ENCODE measurements at regions of chr19 and their contacts with region 1.

Region 1: GRCh38 chr19:13060964-13061927 is 41.4 kb downstream of the LYL1 start:
- DNase-seq: peak; percentile 88 to 96 (median 95)
- ATAC-seq: peak; percentile 76 to 80
- H3K4me3 ChIP-seq: peak overlapping the region; percentile 17
- H3K27ac ChIP-seq: peak overlapping the region; percentile 74
- H3K4me1 ChIP-seq: peaks cover 58% of the 10 kb centered on the region
- H3K27me3 ChIP-seq: no peaks in the 10 kb centered on the region

Region 2: DNA sequence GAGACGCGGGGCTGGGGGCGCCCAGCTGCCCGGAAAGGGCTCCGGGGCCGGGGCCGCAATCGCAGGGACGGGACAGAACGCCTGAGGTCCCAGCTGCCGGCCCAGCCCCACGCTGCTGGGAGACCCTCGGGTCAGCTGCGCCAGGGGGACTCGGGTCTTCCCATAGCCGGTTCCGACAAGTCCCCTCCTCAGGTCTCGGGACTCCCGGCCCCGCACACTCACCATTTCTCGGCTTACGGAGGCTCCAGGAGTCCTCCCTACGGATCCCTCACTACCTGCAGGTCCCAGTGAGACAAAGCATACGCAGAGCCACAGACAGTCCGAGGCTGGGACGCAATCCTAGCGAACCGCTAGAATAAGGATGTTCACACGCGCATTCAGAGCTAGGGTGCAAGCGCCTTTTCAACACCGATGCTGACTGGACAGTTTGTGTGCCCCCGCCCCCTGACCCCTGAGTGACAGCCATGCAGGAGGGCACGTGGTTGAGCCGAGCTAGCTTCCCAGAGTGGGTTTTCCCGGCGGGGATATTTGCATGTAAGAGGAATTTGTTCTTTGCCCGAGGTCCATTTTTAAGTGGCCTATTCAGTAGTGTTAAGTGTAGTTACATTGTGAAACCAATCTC is 464.2 kb before region 1 on chr19:
- intact Hi-C with region 1: no loop called
- DNase-seq: peak in 1 of 3 donors; percentile 53
- ATAC-seq: peak; percentile 49 to 54
- H3K4me3 ChIP-seq: no peak overlapping the region
- H3K27ac ChIP-seq: no peak overlapping the region
- H3K4me1 ChIP-seq: no peaks in the 10 kb centered on the region
- H3K27me3 ChIP-seq: no peaks in the 10 kb centered on the region

Region 3: DNA sequence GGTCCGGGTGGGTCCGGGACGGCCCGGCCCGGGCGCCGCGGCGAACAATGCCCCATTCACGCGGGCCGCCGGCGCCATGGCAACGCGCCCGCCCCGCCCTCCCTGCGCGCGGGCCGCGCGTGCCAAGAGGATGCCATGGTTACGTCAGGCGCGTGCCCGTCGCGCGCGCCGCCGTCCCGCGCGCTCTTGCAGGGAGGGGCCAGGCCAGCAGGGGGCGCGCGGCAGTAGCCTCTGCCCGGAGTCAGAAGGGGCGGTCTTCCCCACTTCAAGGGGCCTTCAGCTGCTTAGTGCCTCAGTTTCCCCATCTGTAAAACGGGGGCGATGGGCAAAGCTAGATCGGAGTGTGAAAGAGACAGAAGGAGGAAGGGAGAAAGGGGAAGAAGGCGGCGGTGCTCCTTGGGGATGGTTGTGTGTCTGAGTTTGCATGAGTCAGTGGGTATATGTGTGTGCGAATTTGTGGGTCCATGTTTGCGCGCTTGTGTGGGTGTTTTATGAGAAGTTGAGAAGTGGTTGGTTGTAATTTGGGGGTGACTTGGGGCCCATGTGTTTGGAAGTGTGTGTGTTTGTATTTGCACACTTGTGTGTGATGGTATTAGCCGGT is 77.6 kb before region 1 on chr19:
- intact Hi-C with region 1: loop called in 2 of 4 experiments (anchors 5 to 10 kb)
- DNase-seq: peak; percentile 81 to 94 (median 93)
- ATAC-seq: peak; percentile 77 to 80
- H3K4me3 ChIP-seq: no peak overlapping the region
- H3K27ac ChIP-seq: no peak overlapping the region
- H3K4me1 ChIP-seq: peaks cover 3% of the 10 kb centered on the region
- H3K27me3 ChIP-seq: no peaks in the 10 kb centered on the region

Region 4: GRCh38 chr19:12994701-12995595 is 66.3 kb before region 1 on chr19 and contains the start of gene NFIX:
- intact Hi-C with region 1: loop called in 1 of 4 experiments (anchors 10 kb)
- DNase-seq: peak; percentile 81 to 91 (median 90)
- ATAC-seq: peak; percentile 35 to 42
- H3K4me3 ChIP-seq: peak within 1 kb of the TSS; percentile 95
- H3K27ac ChIP-seq: peak within 1 kb of the TSS; percentile 22
- H3K4me1 ChIP-seq: peaks cover 3% of the 10 kb centered on the region
- H3K27me3 ChIP-seq: no peaks in the 10 kb centered on the region
- total RNA-seq, gene NFIX: 123 to 168 (median 156) TPM

Region 5: DNA sequence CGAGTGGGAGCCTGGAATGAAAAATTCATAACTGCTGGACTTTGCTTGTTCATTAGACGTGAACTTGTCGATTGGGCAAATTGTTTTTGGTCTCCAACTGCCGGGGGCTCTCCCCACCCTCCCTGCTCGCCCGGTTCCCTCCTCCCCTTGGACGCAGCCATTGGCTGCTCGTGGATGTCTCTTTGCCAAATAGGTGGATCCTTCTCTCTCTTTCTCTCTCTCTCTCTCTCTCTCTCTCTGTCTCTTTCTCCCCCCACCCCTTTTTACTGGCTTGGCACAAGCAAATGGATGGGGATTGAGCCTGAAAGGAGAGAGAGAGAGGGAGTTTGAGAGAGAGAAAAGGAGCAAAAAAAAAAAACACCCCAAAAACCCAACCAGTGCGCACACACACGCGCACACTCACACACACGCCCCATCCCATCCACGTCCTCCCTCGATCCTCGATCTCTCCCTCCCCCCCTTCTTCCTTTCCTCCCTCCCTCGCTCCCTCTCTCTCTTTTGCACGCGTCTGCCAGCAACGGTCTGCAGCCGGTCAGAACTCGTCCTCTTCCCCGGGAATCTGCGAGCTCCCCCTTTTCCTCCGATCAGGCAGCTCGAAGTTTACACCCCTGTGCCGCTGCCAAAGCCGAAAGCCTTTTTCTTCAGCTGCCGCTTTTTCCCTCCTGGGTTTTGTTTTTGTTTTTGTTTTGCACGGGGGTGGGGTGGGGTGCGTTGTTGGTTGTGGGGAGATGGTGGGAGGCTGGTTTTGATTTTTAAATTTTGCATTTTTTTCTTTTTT is 38.2 kb before region 1 on chr19:
- intact Hi-C with region 1: loop called in 2 of 4 experiments (anchors 5 kb)
- DNase-seq: peak; percentile 88 to 94 (median 94)
- ATAC-seq: peak; percentile 82 to 88
- H3K4me3 ChIP-seq: peak overlapping the region; percentile 27
- H3K27ac ChIP-seq: peak overlapping the region; percentile 91
- H3K4me1 ChIP-seq: peaks cover 17% of the 10 kb centered on the region
- H3K27me3 ChIP-seq: no peaks in the 10 kb centered on the region

Region 6: GRCh38 chr19:13099073-13099999 is 38.1 kb after region 1 on chr19:
- intact Hi-C with region 1: loop called in 1 of 4 experiments (anchors 5 kb)
- DNase-seq: peak; percentile 83 to 92 (median 91)
- ATAC-seq: peak in 1 of 2 donors; percentile 6
- H3K4me3 ChIP-seq: peak overlapping the region; percentile 27
- H3K27ac ChIP-seq: peak overlapping the region; percentile 84
- H3K4me1 ChIP-seq: no peaks in the 10 kb centered on the region
- H3K27me3 ChIP-seq: no peaks in the 10 kb centered on the region

Measured in right cardiac atrium (tissue), 5 donors.